Activated naive CD4-positive, alpha-beta T cell treated with anti-CD3 and anti-CD28 coated beads for 36 hours (primary cell): ENCODE measurements at regions of chr2 and their contacts with region 1.

Region 1: DNA sequence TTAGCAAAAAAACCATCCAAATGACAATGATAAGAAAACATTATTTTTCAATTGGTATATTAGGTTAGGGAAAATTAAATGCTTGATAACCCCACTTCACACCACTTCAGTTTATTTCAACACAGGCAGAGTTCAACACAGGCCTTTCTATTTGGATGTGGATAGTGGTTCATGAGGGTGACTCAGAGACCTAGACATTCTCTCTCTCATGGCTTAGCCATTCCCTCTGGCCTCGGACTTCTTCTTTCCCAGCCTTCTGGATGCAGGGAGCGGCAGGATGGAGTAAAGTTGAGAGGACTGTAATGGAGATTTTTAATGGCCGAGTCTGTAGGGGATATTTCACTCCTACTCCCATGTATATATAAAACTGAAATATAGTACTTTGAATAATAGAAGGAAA is 109.7 kb downstream of the CTNNA2 start:
- DNase-seq: no peak
- H3K4me3 Mint-ChIP-seq: no peak overlapping the region
- H3K27ac Mint-ChIP-seq: no peak overlapping the region
- H3K4me1 Mint-ChIP-seq: no peaks in the 10 kb centered on the region
- H3K27me3 Mint-ChIP-seq: no peaks in the 10 kb centered on the region

Region 2: GRCh38 chr2:79585701-79586433 is 36.6 kb before region 1 on chr2:
- CTCF ChIA-PET with region 1: no interaction called
- intact Hi-C with region 1: no loop called
- DNase-seq: no peak
- H3K4me3 Mint-ChIP-seq: no peak overlapping the region
- H3K27ac Mint-ChIP-seq: no peak overlapping the region
- H3K4me1 Mint-ChIP-seq: no peaks in the 10 kb centered on the region
- H3K27me3 Mint-ChIP-seq: no peaks in the 10 kb centered on the region

Region 3: DNA sequence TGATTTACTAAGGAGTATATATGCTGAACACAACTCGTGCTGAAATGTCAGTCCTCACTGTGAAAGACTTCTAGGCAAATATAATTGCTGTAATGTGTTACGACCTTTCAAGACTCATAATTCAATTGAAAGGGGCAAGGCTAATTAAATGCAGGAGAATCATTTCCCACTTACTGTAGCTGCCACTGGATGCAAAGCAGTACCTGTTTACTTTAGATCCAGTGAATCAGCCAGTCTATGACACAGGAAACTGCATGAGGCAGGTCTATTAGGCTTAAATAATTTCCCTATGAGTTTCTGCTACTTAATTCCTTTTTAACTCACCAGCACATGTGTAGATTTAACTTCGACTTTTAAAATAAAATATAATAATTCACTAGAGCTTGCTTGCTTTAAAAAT is 15.9 kb after region 1 on chr2:
- CTCF ChIA-PET with region 1: no interaction called
- intact Hi-C with region 1: no loop called
- DNase-seq: no peak
- H3K4me3 Mint-ChIP-seq: no peak overlapping the region
- H3K27ac Mint-ChIP-seq: no peak overlapping the region
- H3K4me1 Mint-ChIP-seq: no peaks in the 10 kb centered on the region
- H3K27me3 Mint-ChIP-seq: no peaks in the 10 kb centered on the region

Region 4: DNA sequence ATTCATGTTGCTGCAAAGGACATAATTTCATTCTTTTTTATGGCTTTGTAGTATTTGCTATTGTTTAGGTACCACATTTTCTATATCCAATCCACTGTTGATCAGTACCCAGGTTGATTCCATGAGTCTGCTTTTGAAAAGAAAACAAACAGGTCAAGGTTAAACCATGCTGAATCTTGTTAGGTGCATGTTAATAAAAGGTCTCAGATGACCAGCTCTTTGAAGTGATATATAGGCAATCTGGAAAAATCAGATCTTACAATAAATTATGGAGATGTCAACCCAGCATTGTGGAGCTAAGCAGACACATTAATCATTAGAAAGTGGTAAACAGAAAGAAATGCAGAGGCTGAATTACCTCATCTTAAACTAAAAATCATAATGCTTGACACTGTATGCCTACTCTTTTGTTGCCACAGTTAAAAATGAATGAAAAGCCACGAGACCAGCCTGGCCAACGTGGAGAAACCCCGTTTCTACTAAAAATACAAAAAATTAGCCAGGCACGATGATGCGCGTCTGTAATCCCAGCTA is 136.3 kb after region 1 on chr2:
- CTCF ChIA-PET with region 1: interaction called, 10 read pairs
- intact Hi-C with region 1: no loop called
- DNase-seq: no peak
- H3K4me3 Mint-ChIP-seq: no peak overlapping the region
- H3K27ac Mint-ChIP-seq: no peak overlapping the region
- H3K4me1 Mint-ChIP-seq: no peaks in the 10 kb centered on the region
- H3K27me3 Mint-ChIP-seq: no peaks in the 10 kb centered on the region